HEK293T (cell line): ENCODE measurements at regions of chrX and their contacts with region 1.

Region 1: GRCh38 chrX:13487731-13488523 is 81.5 kb upstream of the EGFL6 start:
- DNase-seq: peak; percentile 50

Region 2: DNA sequence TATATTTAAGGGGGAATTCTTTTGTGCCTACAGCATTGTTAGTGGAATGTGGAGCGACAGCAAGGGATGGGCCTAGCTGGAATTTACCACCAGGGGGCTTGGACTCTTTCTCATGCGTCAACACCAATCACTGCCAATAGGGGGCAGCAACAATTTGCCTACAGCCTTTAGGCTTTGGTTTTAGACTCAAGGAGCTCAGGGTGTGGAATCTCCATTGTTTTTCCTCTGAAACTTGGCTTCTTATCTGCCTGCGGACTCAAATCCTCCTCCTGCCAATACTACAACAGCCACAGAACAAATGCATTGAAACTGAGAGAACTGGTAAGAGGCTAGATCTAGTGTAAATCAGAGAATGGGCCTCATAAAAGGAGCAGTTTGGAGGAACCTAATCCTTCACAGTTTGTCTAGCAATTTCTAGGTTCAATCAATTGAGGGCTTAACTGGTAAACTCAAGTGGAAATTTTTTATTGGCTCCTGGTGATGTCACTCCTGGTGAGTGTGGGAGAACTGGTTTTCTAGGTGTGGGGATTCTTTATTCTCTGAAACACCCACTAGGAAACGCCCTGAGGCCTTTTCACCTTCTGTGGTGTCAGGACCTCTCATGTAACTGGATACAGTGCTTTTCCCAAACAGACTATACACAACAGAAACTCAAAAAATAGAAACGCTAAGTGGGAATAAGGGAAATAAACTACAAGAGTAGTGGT is 540.9 kb before region 1 on chrX:
- CTCF ChIA-PET with region 1: interaction called, 22 read pairs
- POLR2A ChIA-PET with region 1: no interaction called
- DNase-seq: peak; percentile 83